ENCODE measurements at regions of chrX and their contacts with region 1.

Region 1: DNA sequence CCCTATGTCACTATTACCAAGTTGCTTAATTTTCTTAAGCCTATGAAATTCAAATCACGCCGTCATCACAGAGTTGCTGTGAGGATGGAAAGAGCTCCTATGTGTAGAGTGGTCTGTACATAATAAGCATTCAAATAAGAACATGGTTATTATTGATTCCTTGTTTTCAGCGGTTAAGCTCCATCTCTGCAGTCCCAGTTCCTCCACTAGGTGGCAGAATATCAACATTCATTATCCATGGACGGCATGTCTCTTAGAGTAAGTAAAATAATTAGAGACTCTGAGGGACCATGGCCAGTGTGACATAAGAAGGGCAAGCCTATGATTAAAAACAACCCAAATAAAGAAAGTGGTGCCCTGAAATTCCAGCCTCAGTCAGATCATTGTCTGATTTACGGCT is 132.5 kb upstream of the NHS start:
- DNase-seq: no peak
- ATAC-seq: peak; percentile 25 to 73

Region 2: DNA sequence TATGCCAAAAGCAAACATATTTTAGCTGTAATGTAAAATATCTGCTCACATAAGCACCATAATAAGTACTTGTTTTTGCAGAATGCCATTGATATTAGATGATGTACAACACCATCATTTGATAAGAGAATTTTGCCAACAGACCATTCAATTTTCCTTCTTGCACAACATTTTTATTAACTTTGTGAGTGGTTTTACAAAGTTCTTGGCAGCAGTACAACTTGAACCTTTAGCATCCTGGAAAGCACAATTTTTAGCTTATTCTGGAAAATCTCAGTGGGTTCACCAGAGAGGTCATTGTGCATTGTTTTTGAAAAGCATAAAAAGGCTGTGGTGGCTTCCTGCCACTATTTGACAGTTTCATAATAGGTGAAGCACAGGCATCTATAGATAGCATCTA is 322.4 kb before region 1 on chrX:
- intact Hi-C with region 1: no loop called
- DNase-seq: no peak
- ATAC-seq: no peak

Region 3: DNA sequence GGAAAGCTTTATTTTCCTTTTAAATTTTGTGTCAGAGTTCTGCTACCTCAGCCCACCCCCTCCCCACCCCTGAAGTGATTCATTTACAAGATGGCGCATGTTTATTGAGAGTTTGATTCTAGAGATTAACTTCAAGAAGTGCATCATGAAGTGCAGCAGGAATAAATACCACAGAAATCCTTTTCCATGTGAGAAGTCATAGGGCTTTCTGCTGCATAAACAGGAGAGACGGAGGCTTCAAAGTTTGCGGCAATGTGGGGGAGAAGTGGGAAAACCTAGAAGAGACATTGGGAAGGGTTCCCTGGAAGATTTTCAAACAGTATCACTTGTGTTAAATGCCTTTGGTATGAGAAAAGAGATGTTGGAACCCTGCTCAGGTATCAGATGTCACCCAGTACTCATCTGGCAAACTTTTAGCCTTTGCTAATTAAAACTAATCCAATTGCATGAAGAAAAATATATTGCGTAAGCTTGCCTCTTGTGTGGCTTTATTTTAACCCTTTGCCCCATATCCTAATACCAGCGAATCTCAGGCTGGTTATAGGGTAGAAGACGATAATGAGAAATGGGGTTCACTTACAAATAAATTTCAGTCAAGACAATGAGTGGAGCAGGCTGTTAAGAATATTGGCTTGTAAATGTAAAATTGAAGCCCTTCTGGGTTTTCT is 148.0 kb after region 1 on chrX:
- intact Hi-C with region 1: no loop called
- DNase-seq: no peak
- ATAC-seq: no peak

Region 4: DNA sequence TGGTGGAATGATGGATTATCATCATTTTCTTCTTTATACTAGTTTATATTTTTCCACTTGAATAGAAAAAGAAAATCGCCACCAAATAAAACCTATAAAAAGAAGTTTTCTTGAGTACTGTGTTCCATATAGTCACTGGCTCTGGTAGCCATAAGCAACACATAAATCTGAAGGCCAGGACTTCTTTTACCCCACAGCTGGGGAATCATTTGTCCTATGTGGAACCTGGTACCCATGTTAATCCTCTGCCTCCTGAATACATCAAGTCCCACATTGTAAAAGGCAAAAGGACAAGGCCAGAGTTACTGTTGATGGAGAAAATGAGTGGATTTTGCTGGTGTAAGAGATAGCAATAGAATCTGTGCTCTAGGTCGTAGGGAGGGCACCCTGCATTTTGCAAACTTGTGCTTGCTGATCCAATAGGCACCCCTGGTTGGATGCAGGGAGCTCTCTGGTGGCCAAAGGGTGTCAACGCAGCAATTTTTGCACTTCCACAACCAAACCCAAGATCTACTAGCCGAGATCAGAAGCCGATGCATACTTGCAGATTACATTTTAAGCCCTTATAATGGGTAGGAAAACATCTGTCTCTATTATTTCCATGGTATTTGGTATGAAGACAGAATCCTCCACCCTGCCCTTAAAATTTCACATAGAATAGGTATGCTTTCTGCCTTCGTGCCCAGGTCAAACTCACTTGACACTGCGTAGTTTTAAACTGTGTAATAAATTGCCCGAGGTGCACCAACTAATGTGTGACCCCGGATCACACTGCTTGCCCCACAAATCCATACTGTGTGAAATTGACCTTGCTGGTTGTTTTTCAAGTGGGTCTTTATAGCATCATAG is 348.6 kb after region 1 on chrX:
- intact Hi-C with region 1: loop called (anchors 1 to 10 kb)
- DNase-seq: peak; percentile 44
- ATAC-seq: peak; percentile 86 to 92

Region 5: GRCh38 chrX:17689971-17690409 is 447.5 kb after region 1 on chrX:
- intact Hi-C with region 1: loop called (anchors 5 to 10 kb)
- DNase-seq: no peak
- ATAC-seq: peak; percentile 74 to 82

Measured in left cardiac atrium (tissue), 4 donors.